Activated CD4-positive, alpha-beta T cell treated with anti-CD3 and anti-CD28 coated beads for 36 hours (primary cell): ENCODE measurements at regions of chr16 and their contacts with region 1.

Region 1: DNA sequence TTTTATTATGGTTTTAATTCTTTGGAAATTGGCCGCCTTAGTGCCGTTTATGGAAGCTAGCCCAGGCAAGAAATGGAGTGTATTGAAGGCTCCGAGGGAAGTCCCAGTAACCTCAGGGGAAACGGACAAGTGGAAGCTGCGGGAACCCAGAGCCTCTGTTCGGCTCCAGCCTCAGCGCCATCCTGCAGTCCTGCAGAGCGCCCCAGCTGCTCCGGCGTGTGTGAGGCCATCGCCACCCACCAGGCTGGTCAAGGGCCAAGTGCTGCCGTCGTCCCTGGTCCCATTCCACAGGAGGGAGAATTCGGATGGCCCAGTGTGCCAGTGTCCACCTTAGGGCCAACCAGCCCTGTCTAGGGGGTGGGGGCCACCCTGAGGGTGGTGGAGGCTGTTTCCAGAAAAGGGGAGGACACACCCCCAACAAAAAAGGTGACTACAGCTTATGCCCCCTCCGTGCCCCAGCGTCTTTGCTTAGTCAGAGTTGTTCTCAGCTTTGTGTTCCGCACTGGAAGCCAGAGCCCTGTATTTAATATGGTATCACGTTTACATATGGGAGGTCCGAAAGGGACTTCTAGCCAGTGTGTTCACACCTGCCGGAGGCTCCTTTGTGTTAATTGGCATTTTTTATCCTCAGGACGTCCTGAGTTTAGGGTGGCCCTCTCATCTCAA is 13.0 kb downstream of the MGRN1 start:
- DNase-seq: no peak
- ATAC-seq: no peak
- H3K4me3 Mint-ChIP-seq: no peak overlapping the region
- H3K27ac Mint-ChIP-seq: no peak overlapping the region
- H3K4me1 Mint-ChIP-seq: peaks cover 19% of the 10 kb centered on the region
- H3K27me3 Mint-ChIP-seq: no peaks in the 10 kb centered on the region

Region 2: GRCh38 chr16:4649744-4650442 is 12.3 kb after region 1 on chr16:
- CTCF ChIA-PET with region 1: interaction called, 13 read pairs
- POLR2A ChIA-PET with region 1: no interaction called
- intact Hi-C with region 1: no loop called
- DNase-seq: peak; percentile 53
- ATAC-seq: peak; percentile 54
- H3K4me3 Mint-ChIP-seq: no peak overlapping the region
- H3K27ac Mint-ChIP-seq: peak overlapping the region; percentile 37
- H3K4me1 Mint-ChIP-seq: peaks cover 31% of the 10 kb centered on the region
- H3K27me3 Mint-ChIP-seq: no peaks in the 10 kb centered on the region

Region 3: DNA sequence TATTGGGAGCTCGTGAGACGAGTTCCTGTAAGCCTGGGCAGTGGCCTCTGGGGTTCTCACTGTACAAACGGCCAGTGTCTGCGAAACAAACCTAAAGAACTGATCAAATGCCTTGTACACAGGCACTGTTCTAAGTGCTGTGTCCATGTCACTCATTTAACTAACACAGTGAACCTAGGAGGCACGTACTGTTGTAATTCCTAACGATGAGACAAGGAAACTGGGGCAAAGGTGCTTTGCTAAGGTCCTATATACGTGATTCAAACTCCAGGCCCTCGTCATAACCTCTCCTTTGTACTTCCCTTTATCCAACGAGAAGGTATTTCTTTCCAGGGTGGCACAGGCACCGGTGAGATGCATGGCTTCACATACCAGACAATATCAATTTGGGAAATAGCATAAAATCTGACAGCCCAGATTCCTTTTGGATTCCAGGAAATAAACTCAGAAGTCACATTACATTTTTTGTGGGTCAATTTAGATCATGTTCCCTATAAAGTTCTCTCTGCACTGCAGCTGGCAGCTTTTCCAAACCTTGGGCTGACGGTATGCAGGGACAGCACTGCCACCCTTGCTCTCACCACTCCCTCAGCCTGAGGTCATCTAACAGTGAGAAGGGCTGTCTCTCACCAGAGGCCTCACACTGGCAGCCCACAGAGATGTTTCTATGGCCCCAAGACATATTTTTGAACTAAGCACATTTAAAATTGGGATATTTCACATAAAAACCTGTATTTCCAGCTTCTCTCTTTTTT is 191.1 kb after region 1 on chr16:
- CTCF ChIA-PET with region 1: no interaction called
- POLR2A ChIA-PET with region 1: no interaction called
- intact Hi-C with region 1: no loop called
- DNase-seq: no peak
- ATAC-seq: no peak
- H3K4me3 Mint-ChIP-seq: no peak overlapping the region
- H3K27ac Mint-ChIP-seq: no peak overlapping the region
- H3K4me1 Mint-ChIP-seq: peaks cover 1% of the 10 kb centered on the region
- H3K27me3 Mint-ChIP-seq: no peaks in the 10 kb centered on the region